ENCODE measurements at regions of chr14 and their contacts with region 1.

Region 1: GRCh38 chr14:24431569-24432258 is 2.0 kb downstream of the KHNYN start:
- DNase-seq: peak; percentile 91
- CTCF ChIP-seq: peak; percentile 89

Region 2: DNA sequence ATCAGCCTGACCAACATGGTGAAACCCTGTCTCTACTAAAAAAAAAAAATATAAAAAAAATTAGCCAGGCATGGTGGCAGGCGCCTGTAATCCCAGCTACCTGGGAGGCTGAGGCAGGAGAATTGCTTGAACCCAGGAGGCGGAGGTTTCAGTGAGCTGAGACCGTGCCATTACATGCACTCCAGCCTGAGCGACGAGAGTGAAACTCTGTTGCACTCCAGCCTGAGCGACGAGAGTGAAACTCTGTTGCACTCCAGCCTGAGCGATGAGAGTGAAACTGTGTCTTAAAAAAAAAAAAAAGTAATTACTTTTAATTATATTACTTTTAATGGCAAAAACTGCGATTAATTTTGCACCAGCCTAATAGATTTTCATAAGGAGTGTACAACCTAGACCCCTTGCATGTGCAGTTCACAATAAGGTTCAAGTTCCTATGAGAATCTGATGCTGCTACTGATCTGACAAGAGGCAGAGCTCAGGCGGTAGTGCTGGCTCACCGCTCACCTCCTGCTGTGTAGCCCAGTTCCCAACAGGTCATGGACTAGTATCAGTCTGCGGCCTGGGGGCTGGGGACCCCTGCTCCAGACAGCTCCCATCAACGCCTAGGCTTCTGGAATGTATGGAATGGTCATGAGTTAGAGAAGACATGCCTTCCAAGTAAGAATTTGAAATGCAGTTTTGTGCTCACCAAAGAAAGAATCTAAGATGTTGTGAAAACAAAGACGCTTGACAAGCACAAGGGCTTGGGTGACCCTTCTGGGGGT is 110.3 kb before region 1 on chr14:
- in situ Hi-C with region 1: loop called (anchors 5 kb)
- DNase-seq: no peak
- CTCF ChIP-seq: no peak

Region 3: GRCh38 chr14:24366721-24367513 is 64.8 kb before region 1 on chr14:
- in situ Hi-C with region 1: loop called (anchors 10 kb)
- DNase-seq: peak; percentile 90
- CTCF ChIP-seq: no peak

Region 4: DNA sequence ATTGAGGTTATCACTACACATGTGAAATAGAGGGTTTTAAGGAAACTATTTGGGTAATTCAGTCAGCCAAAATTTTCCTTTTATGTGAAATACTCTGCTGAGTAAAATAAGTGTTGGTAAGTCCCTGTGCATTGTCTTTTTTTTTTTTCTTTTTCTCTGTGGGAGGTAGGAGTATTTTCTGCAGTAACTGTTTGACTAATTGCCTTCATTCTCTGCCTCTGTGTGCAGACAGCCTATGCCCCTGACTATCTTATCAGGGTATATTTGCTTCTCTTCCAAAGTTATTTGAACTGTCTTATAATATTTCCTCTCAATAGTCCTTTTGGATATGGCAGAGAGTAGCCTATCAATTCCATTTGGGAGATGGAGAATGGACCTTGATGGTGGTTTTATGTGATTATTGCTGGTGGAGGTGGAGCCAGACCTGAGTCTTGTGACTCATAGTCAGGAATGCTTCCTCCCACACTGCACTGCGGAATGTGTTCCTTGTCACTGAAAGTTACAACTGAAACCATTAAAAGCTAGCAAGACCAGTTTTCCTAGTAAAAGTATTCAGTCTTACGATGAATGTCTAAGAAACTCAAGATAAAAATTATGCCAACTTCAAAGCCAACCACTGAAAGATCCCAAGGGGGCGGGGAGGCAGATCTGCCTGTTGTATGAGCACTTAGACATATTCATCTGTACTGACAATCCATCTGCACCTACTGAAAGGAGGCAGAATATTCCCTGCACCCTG is 659.2 kb after region 1 on chr14:
- in situ Hi-C with region 1: no loop called
- DNase-seq: no peak
- CTCF ChIP-seq: no peak